AG04449 (cell line): ENCODE measurements at regions of chr3 and their contacts with region 1.

Region 1: DNA sequence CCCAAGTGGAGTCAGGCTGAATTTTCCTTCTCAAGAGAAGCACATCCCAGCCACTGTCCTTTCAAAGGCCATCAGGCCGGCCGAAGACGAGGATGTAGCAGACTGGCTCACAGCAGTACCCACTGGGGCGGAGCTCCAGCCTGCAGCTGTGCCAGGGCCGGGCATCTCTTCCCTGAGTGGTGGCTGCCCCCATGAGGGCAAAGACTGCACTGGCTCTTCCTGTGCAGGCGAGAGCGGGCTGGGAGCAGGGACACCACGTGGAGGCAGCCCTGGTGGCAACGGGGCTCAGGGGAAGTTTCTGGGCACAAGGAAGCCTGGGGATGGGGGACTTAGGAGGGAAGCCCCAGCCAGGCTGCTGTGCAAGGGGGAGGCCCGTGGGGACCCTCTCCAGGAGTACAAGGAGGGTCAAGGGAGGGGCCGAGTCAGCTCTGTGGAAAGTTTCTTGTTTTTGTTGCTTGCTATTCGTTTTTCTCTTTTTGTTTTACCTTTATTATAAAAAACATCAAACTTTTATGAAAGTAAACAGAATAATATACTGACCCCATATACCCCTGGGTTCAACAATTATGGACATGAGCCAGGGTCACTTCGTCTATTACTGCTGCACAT is 66.1 kb downstream of the RPN1 start:
- DNase-seq: peak; percentile 23
- H3K4me3 ChIP-seq: no peak overlapping the region
- CTCF ChIP-seq: peak; percentile 98

Region 2: GRCh38 chr3:128448491-128448890 is 136.0 kb before region 1 on chr3:
- CTCF ChIA-PET with region 1: no interaction called
- POLR2A ChIA-PET with region 1: no interaction called
- DNase-seq: no peak
- H3K4me3 ChIP-seq: no peak overlapping the region
- CTCF ChIP-seq: no peak

Region 3: GRCh38 chr3:128572644-128573105 is 11.8 kb before region 1 on chr3:
- CTCF ChIA-PET with region 1: interaction called, 13 read pairs
- POLR2A ChIA-PET with region 1: no interaction called
- DNase-seq: no peak
- H3K4me3 ChIP-seq: no peak overlapping the region
- CTCF ChIP-seq: peak; percentile 17